Calu3 (cell line): ENCODE measurements at regions of chr6 and their contacts with region 1.

Region 1: GRCh38 chr6:128508588-128509296 is 11.7 kb downstream of the PTPRK start:
- DNase-seq: peak; percentile 69
- H3K4me3 Mint-ChIP-seq: peak overlapping the region; percentile 56
- H3K27ac Mint-ChIP-seq: peak overlapping the region; percentile 97
- H3K4me1 Mint-ChIP-seq: peaks cover 77% of the 10 kb centered on the region
- H3K27me3 Mint-ChIP-seq: no peaks in the 10 kb centered on the region
- CTCF ChIP-seq: no peak

Region 2: DNA sequence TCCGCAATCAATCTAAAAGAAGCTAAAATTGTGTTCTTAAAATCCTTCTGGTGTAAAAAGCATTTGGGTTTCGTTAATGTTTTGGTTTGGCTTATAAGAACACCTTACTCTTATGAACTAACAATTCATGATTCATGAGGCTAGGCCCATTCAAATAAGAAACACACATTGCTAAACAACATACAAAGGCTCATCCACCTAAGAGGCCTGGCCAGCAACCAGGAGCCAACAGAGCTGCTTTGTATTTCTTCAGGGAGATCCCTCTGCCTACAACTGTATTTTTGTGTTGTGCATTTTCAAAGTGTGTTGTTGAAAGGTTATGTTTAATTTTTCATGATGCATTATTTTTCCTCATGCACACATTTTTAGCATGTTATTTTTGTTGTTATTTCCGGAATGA is 87.0 kb before region 1 on chr6:
- CTCF ChIA-PET with region 1: no interaction called
- intact Hi-C with region 1: loop called (anchors 5 kb)
- DNase-seq: no peak
- H3K4me3 Mint-ChIP-seq: no peak overlapping the region
- H3K27ac Mint-ChIP-seq: peak overlapping the region; percentile 53
- H3K4me1 Mint-ChIP-seq: peaks cover 57% of the 10 kb centered on the region
- H3K27me3 Mint-ChIP-seq: no peaks in the 10 kb centered on the region
- CTCF ChIP-seq: no peak

Region 3: GRCh38 chr6:128491610-128492206 is 17.0 kb before region 1 on chr6:
- CTCF ChIA-PET with region 1: interaction called, 11 read pairs
- intact Hi-C with region 1: no loop called
- DNase-seq: no peak
- H3K4me3 Mint-ChIP-seq: peak overlapping the region; percentile 59
- H3K27ac Mint-ChIP-seq: peak overlapping the region; percentile 99
- H3K4me1 Mint-ChIP-seq: peaks cover 86% of the 10 kb centered on the region
- H3K27me3 Mint-ChIP-seq: no peaks in the 10 kb centered on the region
- CTCF ChIP-seq: no peak